Panc1 (cell line): ENCODE measurements at regions of chr19 and their contacts with region 1.

Region 1: DNA sequence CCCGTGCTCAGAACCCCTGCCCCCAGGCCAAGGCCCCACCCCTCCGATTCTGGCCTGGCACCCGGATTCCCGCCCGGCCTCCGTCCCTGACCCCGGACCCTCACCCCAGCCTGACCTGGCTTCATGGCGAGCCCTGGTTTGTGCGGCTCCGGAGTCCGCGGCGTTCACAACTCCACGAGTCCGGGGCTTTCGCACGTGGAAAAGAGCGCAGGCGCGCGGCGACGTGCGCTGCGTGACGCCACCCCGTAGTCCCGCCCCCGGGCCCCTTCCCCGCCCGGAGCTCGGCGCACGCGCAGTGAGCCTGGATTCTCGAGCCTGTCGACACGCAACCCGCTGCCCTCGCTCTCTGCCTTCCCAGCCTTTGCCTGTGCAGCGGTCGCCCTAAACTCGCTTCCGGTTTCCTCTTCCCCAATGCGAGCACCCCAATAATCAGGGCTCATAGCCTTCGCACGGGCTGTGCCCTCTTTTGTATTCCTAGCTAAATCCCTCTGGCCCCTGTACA is at the start of gene FBL:
- DNase-seq: peak; percentile 100
- ATAC-seq: peak; percentile 91
- H3K4me3 ChIP-seq: peak within 1 kb of the TSS; percentile 35 to 52
- H3K27ac ChIP-seq: peak within 1 kb of the TSS; percentile 83
- H3K4me1 ChIP-seq: peaks cover 60% of the 10 kb centered on the region
- H3K27me3 ChIP-seq: no peaks in the 10 kb centered on the region
- CTCF ChIP-seq: no peak
- total RNA-seq, gene FBL: 4,927 TPM

Region 2: DNA sequence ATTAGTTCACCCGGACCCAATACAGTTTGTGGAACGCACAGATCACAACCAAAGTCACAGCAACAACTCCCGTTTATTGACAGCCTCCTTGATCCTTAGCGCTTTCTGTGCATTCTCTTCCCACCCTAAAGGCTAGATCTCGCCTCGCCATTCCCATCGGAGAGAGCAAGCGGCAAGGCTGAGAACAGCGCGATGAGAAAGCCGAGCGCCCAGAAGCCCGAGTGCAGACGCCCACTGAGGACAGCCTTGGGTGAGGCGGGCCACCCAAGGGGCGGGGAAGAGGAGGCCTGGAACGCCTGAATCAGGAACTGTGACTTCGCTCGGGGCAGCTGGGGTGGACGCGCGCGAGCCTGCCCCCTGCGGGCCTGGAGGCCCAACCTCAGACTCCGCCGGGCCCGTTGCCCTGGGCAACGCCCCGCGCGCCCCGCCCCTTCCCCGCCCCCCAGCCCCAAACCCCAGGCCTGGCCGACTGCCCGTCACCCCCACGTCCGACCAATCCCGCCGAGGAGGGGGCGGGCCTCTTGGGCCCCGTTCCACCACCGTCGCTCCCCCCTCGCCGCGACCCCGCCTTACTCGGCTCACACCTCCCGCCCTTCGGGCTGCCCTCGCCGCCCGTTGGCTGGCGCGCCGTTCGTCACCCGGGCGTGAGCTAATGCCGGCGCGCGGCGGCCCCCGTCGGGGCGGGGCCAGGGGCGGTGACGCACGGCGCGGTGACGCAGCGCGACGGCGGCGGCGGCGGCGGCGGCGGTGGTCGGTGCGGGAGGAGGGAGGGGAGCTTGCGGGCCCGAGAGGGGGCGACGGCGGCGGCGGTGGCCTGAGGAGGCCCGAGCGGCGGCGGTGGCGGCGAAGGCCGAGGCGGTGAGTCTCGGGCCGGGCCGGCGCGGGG is 504.3 kb before region 1 on chr19 and contains the start of gene SAMD4B:
- CTCF ChIA-PET with region 1: no interaction called
- POLR2A ChIA-PET with region 1: interaction called, 15 read pairs
- in situ Hi-C with region 1: no loop called
- intact Hi-C with region 1: no loop called
- DNase-seq: peak; percentile 100
- ATAC-seq: peak; percentile 94
- H3K4me3 ChIP-seq: peak within 1 kb of the TSS; percentile 39 to 60
- H3K27ac ChIP-seq: peak within 1 kb of the TSS; percentile 88
- H3K4me1 ChIP-seq: peaks cover 40% of the 10 kb centered on the region
- H3K27me3 ChIP-seq: no peaks in the 10 kb centered on the region
- CTCF ChIP-seq: no peak
- total RNA-seq, gene SAMD4B: 1,339 TPM

Region 3: GRCh38 chr19:39765091-39766076 is 80.8 kb before region 1 on chr19:
- CTCF ChIA-PET with region 1: interaction called, 116 read pairs
- POLR2A ChIA-PET with region 1: interaction called, 7 read pairs
- in situ Hi-C with region 1: no loop called
- intact Hi-C with region 1: loop called (anchors 1 kb)
- DNase-seq: peak; percentile 89
- ATAC-seq: peak; percentile 76
- H3K4me3 ChIP-seq: no peak overlapping the region
- H3K27ac ChIP-seq: no peak overlapping the region
- H3K4me1 ChIP-seq: no peaks in the 10 kb centered on the region
- H3K27me3 ChIP-seq: peaks cover 42% of the 10 kb centered on the region
- CTCF ChIP-seq: no peak

Region 4: DNA sequence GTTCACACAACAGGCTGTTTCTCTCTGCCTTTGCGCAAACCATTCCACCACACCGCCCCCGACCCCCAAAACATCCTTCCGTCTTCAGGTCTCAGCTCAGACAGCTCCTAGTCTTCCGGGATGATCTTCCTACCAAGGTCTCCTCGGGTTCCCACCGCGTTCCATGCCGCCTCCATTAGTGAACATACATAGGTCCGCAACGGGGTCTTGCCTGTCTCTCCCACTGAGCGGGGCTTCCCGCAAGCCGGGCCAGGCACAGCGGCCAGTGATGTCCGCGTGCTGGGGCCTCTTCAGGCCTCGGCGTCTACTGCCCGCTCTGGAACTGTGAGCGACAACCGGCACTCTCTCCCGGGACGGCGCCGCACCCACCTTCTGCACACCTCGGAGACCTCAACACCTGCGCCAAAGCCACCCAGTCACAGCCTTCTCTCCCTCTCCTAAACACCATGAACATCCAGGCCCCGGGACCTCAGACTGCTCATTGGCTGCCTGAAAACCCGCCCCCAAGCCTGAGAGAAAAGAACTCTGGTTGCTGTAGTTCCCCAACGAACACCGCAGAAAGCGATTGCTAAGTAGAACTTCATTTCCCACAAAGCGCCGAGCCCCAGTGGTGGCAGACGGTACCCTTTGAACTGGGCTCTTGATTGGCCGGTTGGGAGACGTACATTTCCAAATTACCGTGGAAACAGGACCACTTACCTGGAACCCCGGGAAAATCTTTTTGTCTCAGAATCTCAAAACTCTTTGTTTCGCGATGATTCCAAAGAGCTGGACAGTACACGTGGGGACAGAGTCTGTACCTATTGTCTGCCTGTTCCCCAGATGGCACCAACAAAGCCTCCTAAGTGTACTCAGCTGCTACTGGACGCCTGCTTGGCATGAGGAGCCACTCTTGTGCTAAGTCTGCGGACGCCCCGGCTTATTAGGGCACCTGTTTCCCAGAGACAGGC is 21.8 kb before region 1 on chr19:
- CTCF ChIA-PET with region 1: interaction called, 72 read pairs
- POLR2A ChIA-PET with region 1: interaction called, 10 read pairs
- in situ Hi-C with region 1: no loop called
- intact Hi-C with region 1: no loop called
- DNase-seq: peak; percentile 100
- ATAC-seq: peak; percentile 97
- H3K4me3 ChIP-seq: peak overlapping the region; percentile 37 to 51
- H3K27ac ChIP-seq: peak overlapping the region; percentile 78
- H3K4me1 ChIP-seq: peaks cover 22% of the 10 kb centered on the region
- H3K27me3 ChIP-seq: no peaks in the 10 kb centered on the region
- CTCF ChIP-seq: no peak

Region 5: DNA sequence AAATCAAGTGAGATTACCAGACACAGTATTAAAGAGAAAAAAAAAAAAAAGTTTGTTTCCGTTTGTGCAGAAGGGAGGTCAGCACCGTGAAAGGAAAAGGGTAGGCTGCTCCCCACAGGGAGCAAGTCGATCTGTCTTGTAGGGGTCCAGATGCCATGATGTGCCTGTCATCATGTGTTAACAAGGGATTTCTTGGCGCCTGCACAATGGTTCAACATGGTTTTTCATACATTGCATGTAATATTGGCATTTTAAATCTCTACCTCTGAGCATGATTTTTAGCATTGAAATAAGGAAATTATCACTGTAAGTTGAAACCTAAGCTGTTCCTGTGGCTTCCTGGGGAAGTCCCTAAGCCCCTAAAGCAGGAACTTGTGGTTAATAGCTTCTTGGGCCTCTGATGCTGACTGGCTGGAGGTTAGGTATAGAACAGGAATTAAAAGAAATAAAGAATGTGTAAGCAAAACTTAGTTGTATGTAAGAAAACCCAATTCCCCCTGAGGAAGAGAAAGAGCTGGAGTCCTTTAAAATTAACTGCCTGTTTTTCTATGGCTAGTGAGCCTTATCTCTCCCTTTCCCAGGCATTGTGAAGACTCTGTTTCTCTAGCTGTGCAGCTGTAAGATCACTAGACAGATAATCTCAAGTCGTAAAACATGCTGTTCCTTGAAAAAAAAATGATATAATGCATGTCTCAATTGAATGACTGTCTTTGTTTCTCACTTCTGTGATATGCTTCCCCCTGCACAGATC is 95.6 kb after region 1 on chr19:
- CTCF ChIA-PET with region 1: interaction called, 6 read pairs
- POLR2A ChIA-PET with region 1: interaction called, 4 read pairs
- in situ Hi-C with region 1: loop called (anchors 5 kb)
- intact Hi-C with region 1: no loop called
- DNase-seq: no peak
- ATAC-seq: no peak
- H3K4me3 ChIP-seq: no peak overlapping the region
- H3K27ac ChIP-seq: no peak overlapping the region
- H3K4me1 ChIP-seq: peaks cover 8% of the 10 kb centered on the region
- H3K27me3 ChIP-seq: peaks cover 34% of the 10 kb centered on the region
- CTCF ChIP-seq: no peak

Region 6: DNA sequence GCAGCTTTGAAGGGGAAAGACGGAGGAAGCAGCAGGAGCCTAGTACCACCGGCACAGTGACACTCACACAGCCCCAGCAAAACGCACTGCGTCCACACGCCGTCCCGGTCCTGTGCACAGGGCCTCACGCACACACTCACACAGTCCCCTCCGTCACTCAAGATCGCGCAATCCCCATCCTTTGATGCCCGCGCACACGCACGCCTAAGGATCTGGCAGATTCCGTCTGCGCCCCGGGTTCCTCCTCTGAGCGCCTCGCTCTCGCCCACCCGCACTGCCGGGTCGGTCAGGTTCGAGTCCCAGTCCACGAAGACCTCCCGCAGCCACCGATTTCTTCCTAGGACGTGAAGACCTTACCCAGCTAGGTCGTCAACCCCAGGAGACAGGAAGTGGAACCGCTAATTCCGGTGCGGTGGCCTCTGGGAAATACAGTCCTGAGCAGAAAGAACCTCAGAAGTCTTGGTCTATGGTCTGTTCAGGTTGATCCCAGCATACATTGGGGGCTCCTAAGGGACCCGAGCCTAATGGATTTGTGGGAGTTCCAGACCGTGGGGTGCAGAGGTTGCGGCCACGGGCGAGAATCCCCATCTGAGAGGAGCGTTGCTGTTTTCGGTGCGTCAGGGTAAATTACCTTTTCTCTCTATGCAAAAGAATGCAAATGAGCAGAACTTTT is 209.7 kb after region 1 on chr19 and contains the start of gene ZNF780B:
- CTCF ChIA-PET with region 1: no interaction called
- POLR2A ChIA-PET with region 1: interaction called, 5 read pairs
- in situ Hi-C with region 1: loop called (anchors 10 kb)
- intact Hi-C with region 1: no loop called
- DNase-seq: peak; percentile 100
- ATAC-seq: peak; percentile 99
- H3K4me3 ChIP-seq: peak within 1 kb of the TSS; percentile 36 to 50
- H3K27ac ChIP-seq: peak within 1 kb of the TSS; percentile 78
- H3K4me1 ChIP-seq: peaks cover 16% of the 10 kb centered on the region
- H3K27me3 ChIP-seq: no peaks in the 10 kb centered on the region
- CTCF ChIP-seq: no peak
- total RNA-seq, gene ZNF780B: 237 TPM